ENCODE measurements at regions of chr6 and their contacts with region 1.

Region 1: DNA sequence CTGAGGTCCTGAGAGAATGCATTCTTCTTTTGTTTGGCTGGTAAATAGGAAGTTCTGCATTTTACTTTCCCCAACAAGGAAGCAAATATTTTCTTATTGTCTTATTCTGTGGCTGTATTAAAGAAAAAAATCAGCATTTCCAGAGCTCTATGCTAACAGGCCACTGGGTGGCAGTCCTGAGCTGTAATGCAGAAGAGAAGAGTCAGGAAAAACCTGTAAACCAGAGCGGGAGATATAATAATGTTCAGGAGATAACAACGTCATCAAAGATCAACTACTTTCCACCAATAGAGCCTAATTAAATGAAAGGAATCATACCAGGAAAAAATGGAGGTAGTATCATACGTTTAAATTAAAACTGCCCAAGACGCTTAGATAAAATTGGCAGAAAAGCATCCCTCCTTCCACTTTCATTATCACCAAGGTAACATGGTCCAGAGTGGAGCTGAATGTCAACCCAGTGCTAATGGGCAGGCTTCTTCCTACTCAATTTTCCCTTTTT is 55.6 kb upstream of the CARMIL1 start:
- DNase-seq: peak; percentile 92
- H3K4me3 Mint-ChIP-seq: peak overlapping the region; percentile 1
- H3K27ac Mint-ChIP-seq: no peak overlapping the region
- H3K4me1 Mint-ChIP-seq: peaks cover 29% of the 10 kb centered on the region
- H3K27me3 Mint-ChIP-seq: no peaks in the 10 kb centered on the region
- CTCF ChIP-seq: peak; percentile 99

Region 2: DNA sequence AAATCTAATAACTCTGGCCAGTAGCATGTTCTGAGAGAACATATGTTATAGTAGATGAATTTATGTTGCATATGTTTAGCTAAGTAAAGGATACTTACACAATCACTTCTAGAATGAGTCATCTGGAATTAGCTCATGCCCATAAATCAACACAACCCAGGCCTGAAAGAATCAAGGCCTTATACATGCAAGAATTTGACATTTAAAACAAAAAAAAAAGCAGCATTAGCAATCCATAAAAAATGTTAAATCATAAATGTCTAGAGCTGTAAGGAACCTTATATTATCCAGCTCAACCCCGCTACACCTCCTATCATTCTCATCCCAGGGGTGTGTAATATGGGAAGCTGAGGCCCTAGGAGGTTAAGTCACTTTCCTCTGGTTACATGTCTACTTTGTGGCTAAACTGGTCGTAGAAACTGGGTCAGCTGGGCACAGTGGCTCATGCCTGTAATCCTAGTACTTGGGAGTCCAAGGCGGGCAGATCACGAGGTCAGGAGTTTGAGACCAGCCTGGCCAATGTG is 49.5 kb before region 1 on chr6:
- CTCF ChIA-PET with region 1: interaction called, 13 read pairs
- intact Hi-C with region 1: no loop called
- DNase-seq: peak; percentile 83
- H3K4me3 Mint-ChIP-seq: no peak overlapping the region
- H3K27ac Mint-ChIP-seq: peak overlapping the region; percentile 73
- H3K4me1 Mint-ChIP-seq: peaks cover 57% of the 10 kb centered on the region
- H3K27me3 Mint-ChIP-seq: no peaks in the 10 kb centered on the region
- CTCF ChIP-seq: no peak

Region 3: GRCh38 chr6:25263657-25264056 is 40.1 kb after region 1 on chr6:
- CTCF ChIA-PET with region 1: interaction called, 65 read pairs
- intact Hi-C with region 1: loop called (anchors 1 kb)
- DNase-seq: no peak
- H3K4me3 Mint-ChIP-seq: no peak overlapping the region
- H3K27ac Mint-ChIP-seq: no peak overlapping the region
- H3K4me1 Mint-ChIP-seq: peaks cover 10% of the 10 kb centered on the region
- H3K27me3 Mint-ChIP-seq: no peaks in the 10 kb centered on the region
- CTCF ChIP-seq: no peak

Region 4: DNA sequence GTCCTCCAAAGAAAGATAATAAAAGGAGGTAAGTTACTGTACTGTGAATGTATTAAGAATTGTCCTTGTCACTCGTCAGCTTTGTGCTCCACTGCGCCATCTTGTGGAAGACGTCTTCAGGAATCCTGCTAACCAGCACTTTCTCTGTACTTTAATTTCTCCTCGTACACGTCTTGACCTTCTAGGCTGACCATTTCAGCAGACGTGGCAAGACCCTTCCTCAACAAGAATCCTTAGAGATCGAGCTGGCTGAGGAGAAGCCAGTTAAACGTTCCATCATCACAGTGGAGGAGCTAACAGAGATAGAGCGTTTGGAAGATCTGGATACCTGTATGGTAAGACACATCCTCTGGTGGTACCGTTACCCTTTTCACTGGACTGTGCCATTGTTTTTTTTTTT is 333.0 kb after region 1 on chr6:
- CTCF ChIA-PET with region 1: interaction called, 11 read pairs
- intact Hi-C with region 1: loop called (anchors 1 kb)
- DNase-seq: peak; percentile 88
- H3K4me3 Mint-ChIP-seq: no peak overlapping the region
- H3K27ac Mint-ChIP-seq: peak overlapping the region; percentile 2
- H3K4me1 Mint-ChIP-seq: peaks cover 16% of the 10 kb centered on the region
- H3K27me3 Mint-ChIP-seq: no peaks in the 10 kb centered on the region
- CTCF ChIP-seq: peak; percentile 94

Region 5: DNA sequence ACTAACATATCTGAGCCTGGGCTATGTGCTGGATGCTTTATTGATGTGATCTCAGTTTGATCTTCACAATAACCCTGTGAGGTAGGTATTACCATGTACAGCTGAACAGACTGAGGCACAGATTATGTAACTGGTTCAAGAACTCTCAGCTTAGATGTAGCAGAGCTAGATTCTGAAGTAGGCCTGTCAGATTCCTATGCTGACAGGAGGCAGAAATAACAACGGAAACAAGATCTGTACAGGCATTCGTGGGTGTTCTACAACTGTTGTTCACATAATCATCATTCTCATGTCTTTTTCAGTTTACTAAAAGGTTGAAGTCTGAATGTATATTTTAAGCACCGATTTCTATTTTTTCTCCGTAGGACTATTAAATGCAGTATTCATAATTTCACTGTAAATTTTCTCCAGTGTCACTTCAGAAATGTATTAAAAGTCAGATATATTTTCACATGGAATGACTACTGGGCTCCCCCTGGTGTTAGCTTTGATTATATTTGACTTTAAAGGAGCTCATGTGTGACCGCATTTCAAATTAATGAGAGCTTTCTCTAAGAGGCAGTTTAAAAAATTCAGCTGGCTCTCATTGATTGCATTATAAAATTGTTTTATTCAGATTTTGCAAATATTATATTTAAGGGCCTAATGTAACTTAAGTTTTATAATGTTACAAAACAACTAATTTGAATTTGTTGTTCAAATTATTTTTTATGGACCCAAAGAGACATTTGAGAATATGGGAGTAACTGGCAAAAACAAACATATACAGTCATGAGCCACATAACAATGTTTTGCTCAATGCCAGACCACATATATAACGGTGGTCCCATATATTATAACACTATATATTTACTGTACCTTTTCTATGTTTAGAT is 494.6 kb after region 1 on chr6:
- CTCF ChIA-PET with region 1: interaction called, 29 read pairs
- intact Hi-C with region 1: loop called (anchors 1 kb)
- DNase-seq: peak; percentile 59
- H3K4me3 Mint-ChIP-seq: no peak overlapping the region
- H3K27ac Mint-ChIP-seq: no peak overlapping the region
- H3K4me1 Mint-ChIP-seq: peaks cover 9% of the 10 kb centered on the region
- H3K27me3 Mint-ChIP-seq: peaks cover 12% of the 10 kb centered on the region
- CTCF ChIP-seq: peak; percentile 72

Region 6: GRCh38 chr6:25942561-25943147 is 719.1 kb after region 1 on chr6:
- CTCF ChIA-PET with region 1: no interaction called
- intact Hi-C with region 1: loop called (anchors 5 kb)
- DNase-seq: peak; percentile 35
- H3K4me3 Mint-ChIP-seq: no peak overlapping the region
- H3K27ac Mint-ChIP-seq: no peak overlapping the region
- H3K4me1 Mint-ChIP-seq: no peaks in the 10 kb centered on the region
- H3K27me3 Mint-ChIP-seq: no peaks in the 10 kb centered on the region
- CTCF ChIP-seq: peak; percentile 61